Left ventricle myocardium superior (tissue), 1 donor: ENCODE measurements at regions of chr16 and their contacts with region 1.

Region 1: DNA sequence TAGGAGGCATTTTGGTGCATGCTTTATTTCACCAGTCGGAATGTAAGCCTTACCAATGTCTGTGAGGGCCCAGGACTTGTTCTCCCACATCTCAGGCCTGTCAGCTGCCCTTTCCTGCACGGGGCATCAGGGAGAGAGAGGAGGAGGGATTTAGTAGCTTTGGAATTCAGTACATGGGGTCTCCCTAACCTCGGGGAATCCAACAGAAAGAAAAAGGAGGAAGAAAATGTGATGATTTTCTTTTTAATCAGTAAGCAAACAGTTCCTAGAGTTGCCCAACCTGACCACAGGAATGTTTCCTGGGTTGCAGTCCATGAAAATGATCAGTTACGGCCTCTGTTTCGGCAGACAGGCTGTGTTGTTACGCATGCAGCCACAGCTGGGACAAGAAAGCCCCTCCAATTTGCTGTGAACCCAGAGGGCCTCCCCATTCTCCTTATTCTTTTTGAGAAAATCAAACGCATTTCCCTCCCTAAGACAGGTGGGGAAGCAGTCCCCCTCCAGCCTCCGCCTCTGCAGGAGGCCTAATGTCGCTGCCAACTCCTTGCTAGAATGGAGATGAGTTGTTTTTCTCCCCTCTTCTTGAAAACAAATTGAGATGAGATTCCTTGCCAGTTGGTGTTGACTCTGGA is 53.1 kb upstream of the TANGO6 start:
- DNase-seq: no peak
- ATAC-seq: no peak

Region 2: GRCh38 chr16:68528686-68529379 is 261.4 kb before region 1 on chr16:
- intact Hi-C with region 1: loop called (anchors 10 kb)
- DNase-seq: peak; percentile 88
- ATAC-seq: peak; percentile 93

Region 3: GRCh38 chr16:68685685-68686478 is 104.4 kb before region 1 on chr16:
- intact Hi-C with region 1: no loop called
- DNase-seq: no peak
- ATAC-seq: no peak